IMR-90 (cell line): ENCODE measurements at regions of chr15 and their contacts with region 1.

Region 1: GRCh38 chr15:63504247-63504978 is at the start of gene USP3:
- DNase-seq: peak; percentile 94
- ATAC-seq: peak; percentile 87
- H3K4me3 ChIP-seq: peak within 1 kb of the TSS; percentile 74
- H3K27ac ChIP-seq: peak within 1 kb of the TSS; percentile 91
- H3K4me1 ChIP-seq: peaks cover 20% of the 10 kb centered on the region
- H3K27me3 ChIP-seq: no peaks in the 10 kb centered on the region
- CTCF ChIP-seq: peak; percentile 36
- POLR2A ChIP-seq: peak; percentile 89
- RAD21 ChIP-seq: peak; percentile 43; the same call in 1 of the 2 replicates
- total RNA-seq, gene USP3: 46.7 and 52.3 TPM in 2 replicates

Region 2: GRCh38 chr15:63288778-63289378 is 215.5 kb before region 1 on chr15:
- CTCF ChIA-PET with region 1: no interaction called
- POLR2A ChIA-PET with region 1: no interaction called
- dilution Hi-C with region 1: no loop called
- in situ Hi-C with region 1: no loop called
- intact Hi-C with region 1: loop called (anchors 2 kb)
- DNase-seq: peak; percentile 69
- ATAC-seq: peak; percentile 68
- H3K4me3 ChIP-seq: no peak overlapping the region
- H3K27ac ChIP-seq: no peak overlapping the region
- H3K4me1 ChIP-seq: peaks cover 2% of the 10 kb centered on the region; the same call in 1 of the 2 replicates
- H3K27me3 ChIP-seq: no peaks in the 10 kb centered on the region
- CTCF ChIP-seq: peak; percentile 86
- POLR2A ChIP-seq: no peak
- RAD21 ChIP-seq: peak; percentile 88

Region 3: GRCh38 chr15:63466378-63467192 is 37.8 kb before region 1 on chr15:
- CTCF ChIA-PET with region 1: interaction called, 9 read pairs
- POLR2A ChIA-PET with region 1: no interaction called
- dilution Hi-C with region 1: no loop called
- in situ Hi-C with region 1: no loop called
- intact Hi-C with region 1: loop called (anchors 1 kb)
- DNase-seq: peak; percentile 70
- ATAC-seq: peak; percentile 78
- H3K4me3 ChIP-seq: no peak overlapping the region
- H3K27ac ChIP-seq: no peak overlapping the region
- H3K4me1 ChIP-seq: peaks cover 16% of the 10 kb centered on the region
- H3K27me3 ChIP-seq: peaks cover 4% of the 10 kb centered on the region
- CTCF ChIP-seq: peak; percentile 69
- POLR2A ChIP-seq: 0 out of 2 replicates have a peak, but pooled peaks have one; percentile 33
- RAD21 ChIP-seq: peak; percentile 81

Region 4: GRCh38 chr15:63473999-63474809 is 30.2 kb before region 1 on chr15:
- CTCF ChIA-PET with region 1: interaction called, 3 read pairs
- POLR2A ChIA-PET with region 1: interaction called, 3 read pairs
- dilution Hi-C with region 1: no loop called
- in situ Hi-C with region 1: no loop called
- intact Hi-C with region 1: loop called (anchors 1 kb)
- DNase-seq: peak; percentile 90
- ATAC-seq: peak; percentile 73
- H3K4me3 ChIP-seq: no peak overlapping the region
- H3K27ac ChIP-seq: no peak overlapping the region
- H3K4me1 ChIP-seq: peaks cover 23% of the 10 kb centered on the region
- H3K27me3 ChIP-seq: no peaks in the 10 kb centered on the region
- CTCF ChIP-seq: peak; percentile 26; the same call in 1 of the 2 replicates
- POLR2A ChIP-seq: no peak
- RAD21 ChIP-seq: peak; percentile 44

Region 5: DNA sequence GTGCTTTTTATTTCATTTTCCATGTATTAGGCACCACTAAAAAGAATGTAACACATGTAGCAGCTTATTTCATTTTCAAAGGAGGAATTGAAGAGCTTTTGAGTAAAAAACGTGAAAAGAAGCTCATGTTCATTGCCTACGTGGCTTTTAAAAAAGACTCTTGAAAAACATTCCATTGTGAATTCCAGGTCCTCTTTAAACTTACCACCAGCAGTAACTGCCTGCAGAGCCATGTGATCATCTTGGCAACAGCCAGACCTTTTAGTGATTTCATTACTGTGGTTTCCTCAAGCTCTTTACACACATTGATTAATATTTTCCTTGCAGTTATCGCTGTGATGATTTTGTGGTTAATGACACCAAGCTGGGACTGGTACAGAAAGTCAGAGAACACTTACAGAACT is 49.0 kb after region 1 on chr15:
- CTCF ChIA-PET with region 1: interaction called, 4 read pairs
- POLR2A ChIA-PET with region 1: no interaction called
- dilution Hi-C with region 1: no loop called
- in situ Hi-C with region 1: no loop called
- intact Hi-C with region 1: loop called (anchors 2 kb)
- DNase-seq: peak; percentile 97
- ATAC-seq: peak; percentile 86
- H3K4me3 ChIP-seq: peak overlapping the region; percentile 18; the same call in 1 of the 2 replicates
- H3K27ac ChIP-seq: peak overlapping the region; percentile 65; the same call in 1 of the 2 replicates
- H3K4me1 ChIP-seq: no peaks in the 10 kb centered on the region
- H3K27me3 ChIP-seq: no peaks in the 10 kb centered on the region
- CTCF ChIP-seq: no peak
- POLR2A ChIP-seq: no peak
- RAD21 ChIP-seq: peak; percentile 5; the same call in 1 of the 2 replicates

Region 6: GRCh38 chr15:63600616-63601025 is 96.2 kb after region 1 on chr15:
- CTCF ChIA-PET with region 1: interaction called, 3 read pairs
- POLR2A ChIA-PET with region 1: no interaction called
- dilution Hi-C with region 1: no loop called
- in situ Hi-C with region 1: no loop called
- intact Hi-C with region 1: loop called (anchors 1 kb)
- DNase-seq: peak; percentile 93
- ATAC-seq: peak; percentile 82
- H3K4me3 ChIP-seq: peak overlapping the region; percentile 63
- H3K27ac ChIP-seq: peak overlapping the region; percentile 52
- H3K4me1 ChIP-seq: peaks cover 22% of the 10 kb centered on the region
- H3K27me3 ChIP-seq: no peaks in the 10 kb centered on the region
- CTCF ChIP-seq: peak; percentile 30
- POLR2A ChIP-seq: peak; percentile 41; the same call in 1 of the 2 replicates
- RAD21 ChIP-seq: peak; percentile 21; the same call in 1 of the 2 replicates